ENCODE measurements at regions of chr2 and their contacts with region 1.

Region 1: DNA sequence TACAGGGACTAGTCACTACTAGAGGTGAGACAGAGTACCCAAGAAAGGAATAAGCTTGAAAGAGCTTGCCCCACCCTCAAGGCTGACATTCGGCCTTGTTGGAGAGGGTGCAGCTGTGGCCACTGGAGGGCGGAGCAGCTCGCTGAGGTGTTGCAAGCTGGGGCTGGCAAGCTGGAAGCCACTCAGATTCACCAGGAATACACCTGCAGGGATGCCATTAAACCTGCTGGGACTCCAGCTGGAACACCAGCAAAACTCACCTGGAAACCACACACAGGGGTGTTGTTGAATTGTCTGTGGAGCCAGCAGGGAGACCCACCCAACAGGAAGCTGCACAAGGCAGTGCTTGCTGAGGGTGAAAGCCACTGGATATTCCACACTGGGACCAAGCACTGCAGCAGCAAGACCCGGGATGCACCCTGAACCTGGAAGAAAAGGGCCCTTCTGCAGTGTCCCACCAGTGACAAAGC is 26.1 kb downstream of the KCTD18 start:
- DNase-seq: peak; percentile 27
- ATAC-seq: peak; percentile 80
- H3K4me3 ChIP-seq: no peak overlapping the region
- H3K27ac ChIP-seq: no peak overlapping the region
- H3K4me1 ChIP-seq: peaks cover 0 to 26% of the 10 kb centered on the region in 2 experiments; a peak in 2 of 4 replicates
- H3K27me3 ChIP-seq: no peaks in the 10 kb centered on the region
- CTCF ChIP-seq: peak; percentile 71 to 85 (median 80)
- POLR2A ChIP-seq: no peak
- RAD21 ChIP-seq: peak; percentile 83

Region 2: GRCh38 chr2:199973703-199974102 is 510.1 kb before region 1 on chr2:
- CTCF ChIA-PET with region 1: interaction called, 64 read pairs
- POLR2A ChIA-PET with region 1: interaction called, 4 read pairs
- RAD21 ChIA-PET with region 1: interaction called in 1 of 2 experiments, 3 read pairs
- intact Hi-C with region 1: no loop called
- DNase-seq: peak; percentile 29
- ATAC-seq: peak; percentile 74
- H3K4me3 ChIP-seq: no peak overlapping the region
- H3K27ac ChIP-seq: no peak overlapping the region
- H3K4me1 ChIP-seq: peaks cover 10 to 16% of the 10 kb centered on the region in 2 experiments
- H3K27me3 ChIP-seq: no peaks in the 10 kb centered on the region
- CTCF ChIP-seq: peak; percentile 43 to 78 (median 62)
- POLR2A ChIP-seq: no peak
- RAD21 ChIP-seq: peak; percentile 89

Region 3: DNA sequence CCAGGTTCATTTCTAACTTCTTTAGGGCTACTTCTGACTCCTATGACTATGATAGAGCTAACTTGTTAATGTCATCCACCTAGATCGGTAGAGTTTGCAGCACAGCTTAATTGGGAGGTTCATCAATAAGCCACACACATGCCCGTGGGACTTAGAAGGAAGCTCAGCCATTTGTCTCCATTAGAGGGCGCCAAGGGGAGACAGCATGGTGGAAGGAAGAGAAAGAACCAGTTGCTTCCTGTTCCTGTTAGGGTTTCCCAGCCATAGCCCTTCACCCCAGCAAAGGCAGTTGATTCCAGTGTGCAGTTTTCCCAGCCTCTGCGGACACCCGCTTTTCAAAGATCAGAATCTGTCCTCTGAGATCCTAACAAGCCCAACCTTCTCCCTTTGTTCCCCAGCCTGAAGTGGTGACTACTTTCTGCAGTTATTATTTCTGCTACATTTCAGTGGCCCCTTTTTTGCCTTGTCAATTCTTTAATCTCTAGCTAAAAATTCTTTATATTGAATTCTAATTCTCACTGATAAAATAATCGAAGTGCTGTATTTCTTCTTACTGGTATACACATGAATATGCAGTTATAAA is 498.0 kb before region 1 on chr2:
- CTCF ChIA-PET with region 1: interaction called, 60 read pairs
- POLR2A ChIA-PET with region 1: no interaction called
- RAD21 ChIA-PET with region 1: interaction called in 1 of 2 experiments, 3 read pairs
- intact Hi-C with region 1: loop called (anchors 1 kb)
- DNase-seq: peak; percentile 81
- ATAC-seq: peak; percentile 97
- H3K4me3 ChIP-seq: no peak overlapping the region
- H3K27ac ChIP-seq: no peak overlapping the region
- H3K4me1 ChIP-seq: peaks cover 0 to 8% of the 10 kb centered on the region in 2 experiments; a peak in 2 of 4 replicates
- H3K27me3 ChIP-seq: no peaks in the 10 kb centered on the region
- CTCF ChIP-seq: peak; percentile 73 to 93 (median 90)
- POLR2A ChIP-seq: no peak
- RAD21 ChIP-seq: peak; percentile 85

Region 4: DNA sequence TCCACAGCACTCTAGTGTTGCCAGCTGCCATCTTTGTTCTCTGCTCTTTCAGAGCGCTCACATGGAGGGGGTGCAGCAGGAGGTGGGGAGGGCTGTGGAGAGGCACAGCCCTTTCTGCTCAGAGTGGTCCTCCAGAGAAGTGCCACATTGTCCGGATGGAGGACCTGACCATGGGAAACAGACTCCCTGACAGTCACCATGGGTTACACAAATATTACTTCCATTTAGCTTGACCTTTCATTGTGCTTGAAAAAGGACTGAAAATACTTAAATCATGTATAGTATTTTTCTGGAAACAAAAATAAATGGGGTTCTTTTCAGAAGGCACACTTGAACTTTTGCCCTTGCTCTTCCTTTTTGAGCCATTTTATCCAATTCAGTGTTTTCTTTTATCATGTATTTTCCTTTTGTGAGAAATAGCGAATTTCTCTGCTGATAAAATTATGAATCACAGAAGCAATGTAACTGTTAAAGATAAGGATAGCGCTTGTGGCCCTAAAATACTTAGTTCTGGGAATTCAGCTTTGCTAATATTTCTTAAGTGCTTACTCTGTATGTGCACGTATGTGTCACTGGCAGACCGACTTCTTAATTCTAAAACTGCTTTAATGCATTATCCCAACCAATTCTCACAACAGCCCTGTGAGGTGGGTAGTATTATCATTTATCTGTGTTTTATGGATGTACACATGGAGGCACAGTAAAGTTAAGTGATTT is 143.1 kb before region 1 on chr2:
- CTCF ChIA-PET with region 1: no interaction called
- POLR2A ChIA-PET with region 1: no interaction called
- RAD21 ChIA-PET with region 1: no interaction called
- intact Hi-C with region 1: no loop called
- DNase-seq: no peak
- ATAC-seq: no peak
- H3K4me3 ChIP-seq: no peak overlapping the region
- H3K27ac ChIP-seq: no peak overlapping the region
- H3K4me1 ChIP-seq: peaks cover 27 to 41% of the 10 kb centered on the region in 2 experiments
- H3K27me3 ChIP-seq: no peaks in the 10 kb centered on the region
- CTCF ChIP-seq: no peak
- POLR2A ChIP-seq: no peak
- RAD21 ChIP-seq: no peak

Region 5: GRCh38 chr2:200494048-200494447 is 10.3 kb after region 1 on chr2:
- CTCF ChIA-PET with region 1: interaction called, 13 read pairs
- POLR2A ChIA-PET with region 1: no interaction called
- RAD21 ChIA-PET with region 1: no interaction called
- intact Hi-C with region 1: no loop called
- DNase-seq: no peak
- ATAC-seq: no peak
- H3K4me3 ChIP-seq: no peak overlapping the region
- H3K27ac ChIP-seq: no peak overlapping the region
- H3K4me1 ChIP-seq: no peaks in the 10 kb centered on the region
- H3K27me3 ChIP-seq: no peaks in the 10 kb centered on the region
- CTCF ChIP-seq: no peak
- POLR2A ChIP-seq: no peak
- RAD21 ChIP-seq: no peak

Region 6: DNA sequence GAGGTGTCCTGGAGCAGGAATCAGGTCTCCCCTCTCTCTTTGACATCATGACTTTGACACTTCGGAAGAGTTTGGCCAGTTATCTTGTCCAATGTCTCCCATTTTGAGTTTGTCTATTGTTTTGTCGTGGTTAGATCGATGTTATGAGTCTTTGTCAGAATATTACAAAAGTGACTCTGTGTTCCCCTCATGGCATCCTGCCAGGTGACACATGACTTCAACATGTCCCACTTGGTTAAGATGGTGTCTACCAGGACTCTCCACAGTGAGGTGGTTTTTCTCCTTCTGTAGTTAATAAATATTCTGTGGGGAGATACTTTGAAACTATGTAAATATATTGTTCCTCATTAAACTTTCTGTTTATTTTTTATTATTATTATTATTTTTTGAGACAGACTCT is 251.3 kb after region 1 on chr2:
- CTCF ChIA-PET with region 1: interaction called, 11 read pairs
- POLR2A ChIA-PET with region 1: no interaction called
- RAD21 ChIA-PET with region 1: no interaction called
- intact Hi-C with region 1: loop called (anchors 1 kb)
- DNase-seq: no peak
- ATAC-seq: no peak
- H3K4me3 ChIP-seq: no peak overlapping the region
- H3K27ac ChIP-seq: no peak overlapping the region
- H3K4me1 ChIP-seq: peaks cover 0 to 6% of the 10 kb centered on the region in 2 experiments; a peak in 1 of 4 replicates
- H3K27me3 ChIP-seq: no peaks in the 10 kb centered on the region
- CTCF ChIP-seq: no peak
- POLR2A ChIP-seq: no peak
- RAD21 ChIP-seq: no peak

Region 7: DNA sequence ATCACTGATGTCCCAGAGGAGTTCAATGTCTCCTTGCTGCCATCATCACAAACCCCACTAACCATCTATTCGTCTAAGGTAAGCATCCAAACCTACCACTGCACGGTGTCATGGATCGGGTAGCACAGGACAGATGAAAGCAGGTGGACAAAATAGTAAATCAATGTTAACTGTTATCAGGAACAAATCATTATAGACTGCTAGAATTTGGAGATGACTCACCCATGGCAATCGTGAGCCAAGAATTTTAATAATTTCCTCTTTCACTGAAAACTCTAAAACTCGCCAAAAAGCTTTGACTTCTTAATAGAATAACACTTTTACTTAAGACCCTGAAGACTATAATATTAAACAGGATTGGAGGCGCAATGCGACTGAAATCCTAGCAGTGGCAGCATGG is 294.3 kb after region 1 on chr2:
- CTCF ChIA-PET with region 1: no interaction called
- POLR2A ChIA-PET with region 1: no interaction called
- RAD21 ChIA-PET with region 1: no interaction called
- intact Hi-C with region 1: no loop called
- DNase-seq: no peak
- ATAC-seq: no peak
- H3K4me3 ChIP-seq: no peak overlapping the region
- H3K27ac ChIP-seq: no peak overlapping the region
- H3K4me1 ChIP-seq: peaks cover 2 to 35% of the 10 kb centered on the region in 2 experiments; a peak in 3 of 4 replicates
- H3K27me3 ChIP-seq: no peaks in the 10 kb centered on the region
- CTCF ChIP-seq: no peak
- POLR2A ChIP-seq: no peak
- RAD21 ChIP-seq: no peak

Measured in HCT116 (cell line).